Posterior cingulate gyrus (tissue), 11 donors: ENCODE measurements at regions of chr18 and their contacts with region 1.

Region 1: GRCh38 chr18:48030616-48031480 is 100.4 kb upstream of the SMAD2 start:
- DNase-seq: peak in 3 of 10 donors; percentile 46 to 57 (median 50)

Region 2: GRCh38 chr18:48330403-48331022 is 299.7 kb after region 1 on chr18:
- intact Hi-C with region 1: loop called (anchors 10 kb)
- DNase-seq: peak in 1 of 10 donors; percentile 6